ENCODE measurements at regions of chr1 and their contacts with region 1.

Region 1: GRCh38 chr1:222009105-222009730 is 267.3 kb upstream of the DUSP10 start:
- DNase-seq: peak; percentile 36
- ATAC-seq: peak; percentile 95
- H3K4me3 ChIP-seq: no peak overlapping the region
- H3K27ac ChIP-seq: no peak overlapping the region
- H3K4me1 ChIP-seq: no peaks in the 10 kb centered on the region
- H3K27me3 ChIP-seq: no peaks in the 10 kb centered on the region
- CTCF ChIP-seq: peak; percentile 45 to 59 (median 48); a peak in 5 of 6 replicates
- EP300 ChIP-seq: no peak
- POLR2A ChIP-seq: no peak
- RAD21 ChIP-seq: peak; percentile 74

Region 2: GRCh38 chr1:221543529-221544120 is 465.6 kb before region 1 on chr1:
- CTCF ChIA-PET with region 1: interaction called, 26 read pairs
- POLR2A ChIA-PET with region 1: no interaction called
- RAD21 ChIA-PET with region 1: interaction called, 5 read pairs
- SMC1A ChIA-PET with region 1: interaction called, 21 read pairs
- in situ Hi-C with region 1: no loop called
- intact Hi-C with region 1: no loop called
- DNase-seq: no peak
- ATAC-seq: peak; percentile 64
- H3K4me3 ChIP-seq: no peak overlapping the region
- H3K27ac ChIP-seq: no peak overlapping the region
- H3K4me1 ChIP-seq: no peaks in the 10 kb centered on the region
- H3K27me3 ChIP-seq: no peaks in the 10 kb centered on the region
- CTCF ChIP-seq: peak; percentile 39 to 57 (median 53); a peak in 5 of 6 replicates
- EP300 ChIP-seq: no peak
- POLR2A ChIP-seq: no peak
- RAD21 ChIP-seq: peak; percentile 66

Region 3: GRCh38 chr1:221878134-221878533 is 131.1 kb before region 1 on chr1:
- CTCF ChIA-PET with region 1: no interaction called
- POLR2A ChIA-PET with region 1: interaction called, 3 read pairs
- RAD21 ChIA-PET with region 1: no interaction called
- SMC1A ChIA-PET with region 1: interaction called, 5 read pairs
- in situ Hi-C with region 1: no loop called
- intact Hi-C with region 1: loop called (anchors 5 kb)
- DNase-seq: peak; percentile 45
- ATAC-seq: peak; percentile 78
- H3K4me3 ChIP-seq: no peak overlapping the region
- H3K27ac ChIP-seq: peak overlapping the region; percentile 18; the same call in 1 of the 2 replicates
- H3K4me1 ChIP-seq: peaks cover 22% of the 10 kb centered on the region
- H3K27me3 ChIP-seq: no peaks in the 10 kb centered on the region
- CTCF ChIP-seq: no peak
- EP300 ChIP-seq: peak; percentile 54 to 86; a peak in 2 of 4 replicates
- POLR2A ChIP-seq: no peak
- RAD21 ChIP-seq: no peak

Region 4: GRCh38 chr1:222288040-222288439 is 278.8 kb after region 1 on chr1:
- CTCF ChIA-PET with region 1: no interaction called
- POLR2A ChIA-PET with region 1: no interaction called
- RAD21 ChIA-PET with region 1: no interaction called
- SMC1A ChIA-PET with region 1: no interaction called
- in situ Hi-C with region 1: no loop called
- intact Hi-C with region 1: no loop called
- DNase-seq: no peak
- ATAC-seq: no peak
- H3K4me3 ChIP-seq: no peak overlapping the region
- H3K27ac ChIP-seq: no peak overlapping the region
- H3K4me1 ChIP-seq: no peaks in the 10 kb centered on the region
- H3K27me3 ChIP-seq: no peaks in the 10 kb centered on the region; a peak in 1 of 4 replicates
- CTCF ChIP-seq: no peak
- EP300 ChIP-seq: no peak
- POLR2A ChIP-seq: no peak
- RAD21 ChIP-seq: no peak